WTC11 (cell line): ENCODE measurements at regions of chr17 and their contacts with region 1.

Region 1: DNA sequence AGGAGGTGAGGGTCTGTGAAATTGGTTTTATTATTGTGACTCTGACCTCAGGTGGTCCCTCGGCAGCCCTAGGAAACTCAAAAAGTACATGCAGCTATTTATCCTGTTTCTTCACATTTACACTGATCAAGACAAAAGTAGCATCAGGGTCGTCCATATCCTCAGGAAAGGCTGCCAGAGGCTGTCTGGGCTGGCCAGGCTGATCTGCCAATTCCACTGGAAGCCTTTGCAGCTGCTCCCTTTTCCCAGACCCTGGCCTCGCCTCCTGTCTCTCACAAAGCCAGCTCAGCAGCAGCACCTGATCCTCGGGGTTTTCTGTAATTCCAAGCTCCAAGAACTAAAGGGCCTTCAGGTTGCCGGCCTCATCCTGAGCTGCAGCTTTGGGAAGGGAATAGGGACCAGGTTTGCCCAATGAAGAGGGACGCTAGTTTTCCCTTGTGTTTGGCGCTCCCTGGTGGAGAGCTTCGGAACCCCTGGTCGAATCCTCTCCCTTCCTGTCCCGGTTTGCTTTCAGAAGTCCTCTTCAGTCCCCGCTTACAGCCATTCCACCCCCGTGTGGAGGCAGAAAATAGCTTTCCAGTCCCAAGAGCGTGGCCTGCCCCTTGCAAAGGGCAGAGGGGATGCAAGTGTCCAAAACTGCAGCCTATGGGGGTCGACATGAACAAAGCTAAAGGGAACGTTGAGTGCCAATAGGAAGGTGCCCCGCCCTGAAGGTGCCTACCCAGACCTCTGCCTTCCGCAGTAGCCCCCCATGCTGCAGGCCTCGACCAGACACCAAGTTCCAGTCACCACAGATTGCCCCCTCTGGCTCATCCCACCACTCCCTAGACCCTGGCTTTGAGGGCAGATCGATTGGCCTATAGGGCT is 13.4 kb downstream of the MFSD6L start:
- DNase-seq: peak; percentile 97
- ATAC-seq: peak; percentile 97
- H3K4me3 Mint-ChIP-seq: no peak overlapping the region
- H3K27ac Mint-ChIP-seq: no peak overlapping the region
- H3K4me1 Mint-ChIP-seq: peaks cover 19% of the 10 kb centered on the region
- H3K27me3 Mint-ChIP-seq: no peaks in the 10 kb centered on the region; the same call in 1 of the 2 replicates
- CTCF ChIP-seq: peak; percentile 87

Region 2: GRCh38 chr17:8470447-8471047 is 315.2 kb before region 1 on chr17:
- CTCF ChIA-PET with region 1: interaction called, 15 read pairs
- POLR2A ChIA-PET with region 1: no interaction called
- DNase-seq: no peak
- ATAC-seq: no peak
- H3K4me3 Mint-ChIP-seq: no peak overlapping the region
- H3K27ac Mint-ChIP-seq: peak overlapping the region; percentile 97; the same call in 1 of the 2 replicates
- H3K4me1 Mint-ChIP-seq: no peaks in the 10 kb centered on the region
- H3K27me3 Mint-ChIP-seq: no peaks in the 10 kb centered on the region
- CTCF ChIP-seq: no peak

Region 3: GRCh38 chr17:8745586-8746500 is 39.9 kb before region 1 on chr17:
- CTCF ChIA-PET with region 1: interaction called, 22 read pairs
- POLR2A ChIA-PET with region 1: no interaction called
- DNase-seq: peak; percentile 76
- ATAC-seq: peak; percentile 83
- H3K4me3 Mint-ChIP-seq: peak overlapping the region; percentile 93
- H3K27ac Mint-ChIP-seq: no peak overlapping the region
- H3K4me1 Mint-ChIP-seq: peaks cover 4% of the 10 kb centered on the region; the same call in 1 of the 2 replicates
- H3K27me3 Mint-ChIP-seq: no peaks in the 10 kb centered on the region; the same call in 1 of the 2 replicates
- CTCF ChIP-seq: peak; percentile 99

Region 4: DNA sequence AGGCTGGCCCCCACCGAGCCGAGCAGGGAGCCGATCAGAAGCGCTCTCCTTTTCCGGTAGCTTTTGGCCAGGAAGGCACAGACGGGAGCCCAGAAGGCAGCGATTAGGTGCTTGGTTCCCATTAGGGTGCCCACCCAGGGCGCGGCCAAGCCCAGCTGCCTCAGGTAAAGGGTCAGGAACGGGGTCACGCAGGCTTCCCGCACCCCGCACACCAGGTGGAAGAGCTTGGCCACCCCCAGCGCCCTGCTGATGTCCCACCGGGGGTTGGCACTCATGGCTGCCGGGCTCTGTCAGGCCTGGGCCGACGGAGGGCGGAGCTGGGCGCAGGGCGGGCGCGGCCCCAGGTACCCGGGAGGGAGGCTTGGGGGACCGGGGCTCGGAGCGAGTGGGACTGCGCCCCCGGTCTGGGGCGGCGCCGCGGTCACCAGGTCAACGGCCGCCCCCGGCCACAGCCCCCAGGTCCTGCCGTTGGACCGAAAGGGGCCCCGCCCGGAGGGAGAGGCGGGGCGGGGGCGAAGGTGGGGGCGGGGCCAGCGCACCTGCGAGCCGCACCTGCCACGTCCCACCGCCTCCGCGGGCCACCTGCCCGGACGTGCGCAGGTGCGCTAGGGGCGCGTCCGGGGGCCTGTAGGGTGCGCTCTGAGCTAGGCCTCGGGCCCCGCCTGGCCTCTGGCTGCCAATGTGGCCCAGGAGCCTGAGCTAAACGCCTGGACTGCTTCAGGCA is 13.2 kb after region 1 on chr17 and contains the start of gene MFSD6L:
- CTCF ChIA-PET with region 1: interaction called, 50 read pairs
- POLR2A ChIA-PET with region 1: interaction called, 4 read pairs
- DNase-seq: peak; percentile 88
- ATAC-seq: peak; percentile 96
- H3K4me3 Mint-ChIP-seq: peak within 1 kb of the TSS; percentile 81
- H3K27ac Mint-ChIP-seq: peak within 1 kb of the TSS; percentile 27; the same call in 1 of the 2 replicates
- H3K4me1 Mint-ChIP-seq: peaks cover 23% of the 10 kb centered on the region
- H3K27me3 Mint-ChIP-seq: peaks cover 4% of the 10 kb centered on the region; the same call in 1 of the 2 replicates
- CTCF ChIP-seq: no peak
- total RNA-seq, gene MFSD6L: 4.0 to 5.2 TPM (median 4.5 TPM) in 3 replicates

Region 5: DNA sequence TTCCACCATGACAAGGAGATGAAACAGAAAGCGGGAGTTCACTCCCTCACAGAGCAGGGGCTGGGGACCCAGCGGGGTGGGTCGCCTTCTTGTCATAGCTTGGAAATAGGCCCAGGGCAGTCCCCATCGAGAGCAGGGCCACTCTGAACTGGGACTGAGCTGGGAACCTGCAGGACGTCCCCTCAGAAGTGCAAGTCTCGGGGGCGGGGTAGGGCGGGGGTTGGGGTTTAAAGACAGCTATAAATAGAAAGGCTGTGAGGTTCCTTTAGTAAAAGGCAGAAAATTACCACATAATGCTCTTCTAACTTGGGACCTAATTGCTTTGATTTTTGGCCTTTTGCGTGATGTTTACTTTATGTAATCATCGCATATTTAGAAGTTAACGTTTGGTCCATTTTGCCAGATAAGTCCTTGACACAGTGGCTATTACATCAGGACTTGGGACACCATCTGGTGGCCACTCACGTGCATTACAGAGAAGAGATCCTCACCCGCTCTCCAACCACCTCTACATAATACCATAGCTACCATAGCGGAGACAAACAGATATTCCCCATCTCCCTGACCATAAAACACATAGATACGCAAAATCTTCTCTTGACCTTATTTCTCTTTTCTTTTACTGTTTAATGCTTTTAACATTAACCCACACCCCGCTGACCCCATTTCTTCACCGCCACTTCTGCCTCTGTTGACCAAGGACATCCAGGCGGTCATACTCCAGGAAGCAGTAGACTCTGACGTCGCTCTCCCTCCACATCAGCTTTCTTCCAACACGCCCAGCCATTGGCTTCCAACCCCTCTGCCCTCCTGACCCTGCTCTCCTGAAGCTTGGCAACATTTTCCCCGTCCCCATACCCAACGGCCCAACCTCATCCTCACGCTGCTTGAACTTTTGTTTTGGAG is 109.1 kb after region 1 on chr17:
- CTCF ChIA-PET with region 1: interaction called, 30 read pairs
- POLR2A ChIA-PET with region 1: no interaction called
- DNase-seq: peak; percentile 66
- ATAC-seq: peak; percentile 82
- H3K4me3 Mint-ChIP-seq: peak overlapping the region; percentile 70
- H3K27ac Mint-ChIP-seq: no peak overlapping the region
- H3K4me1 Mint-ChIP-seq: peaks cover 17% of the 10 kb centered on the region
- H3K27me3 Mint-ChIP-seq: peaks cover 3% of the 10 kb centered on the region; the same call in 1 of the 2 replicates
- CTCF ChIP-seq: peak; percentile 74